Dorsolateral prefrontal cortex (tissue), 120 donors: ENCODE measurements at regions of chr15 and their contacts with region 1.

Region 1: DNA sequence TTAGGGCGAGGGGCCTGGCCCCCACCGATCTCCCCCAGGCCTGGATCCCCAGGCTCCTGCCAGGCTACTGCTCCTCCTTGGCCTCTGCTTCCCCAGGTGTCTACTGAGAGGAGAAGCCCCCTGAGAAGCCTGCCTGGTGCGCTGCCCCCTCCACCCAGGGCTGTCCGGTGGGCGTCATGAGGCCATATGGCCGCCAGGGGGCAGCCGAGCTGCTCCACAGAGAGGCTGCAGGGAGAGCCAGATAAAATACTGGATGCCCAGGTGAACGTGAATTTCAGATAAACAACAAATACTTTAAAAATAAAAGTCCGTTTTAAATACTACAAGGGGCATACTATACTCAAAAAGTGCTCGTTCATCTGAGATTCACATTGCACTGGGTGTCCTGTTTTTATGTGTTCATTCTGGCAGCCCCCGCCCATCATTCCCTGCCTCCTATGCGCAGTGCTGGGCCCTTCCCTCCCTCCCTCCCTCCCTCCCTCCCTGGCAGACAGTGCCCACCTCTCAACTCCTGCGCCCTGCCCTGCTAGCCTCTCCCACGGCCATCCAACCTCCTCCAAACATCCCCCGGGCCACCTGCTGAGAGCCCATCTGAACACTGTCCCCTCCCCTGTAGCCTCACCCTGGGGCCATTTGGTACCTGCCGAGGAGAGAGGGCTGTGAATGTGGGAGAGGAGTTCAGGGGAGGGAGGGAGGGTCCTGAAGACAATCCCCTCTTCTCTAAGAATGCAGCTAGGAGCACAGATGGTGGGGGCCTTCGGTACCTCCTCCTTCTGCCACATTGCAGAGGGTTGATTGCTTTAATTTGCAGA is 29.6 kb downstream of the PSTPIP1 start:
- DNase-seq: peak; percentile 58 to 81 (median 68)
- H3K4me3 ChIP-seq: peak overlapping the region in 3 of 59 donors; percentile 4 to 26 (median 24)
- H3K27ac ChIP-seq: no peak overlapping the region
- H3K27me3 ChIP-seq: no peaks in the 10 kb centered on the region
- CTCF ChIP-seq: peak; percentile 55 to 99 (median 94)

Region 2: GRCh38 chr15:76931397-76932007 is 93.0 kb before region 1 on chr15 and contains the start of gene RCN2:
- intact Hi-C with region 1: loop called in 1 of 2 experiments (anchors 5 kb)
- DNase-seq: peak; percentile 90 to 98 (median 95)
- H3K4me3 ChIP-seq: peak within 1 kb of the TSS; percentile 45 to 100 (median 83)
- H3K27ac ChIP-seq: peak within 1 kb of the TSS; percentile 41 to 96 (median 87)
- H3K27me3 ChIP-seq: no peaks in the 10 kb centered on the region
- CTCF ChIP-seq: peak in 41 of 56 donors; percentile 3 to 66 (median 32)
- total RNA-seq, gene RCN2: 30.8 to 80.2 (median 58.9) TPM

Region 3: GRCh38 chr15:76973362-76973743 is 51.1 kb before region 1 on chr15:
- intact Hi-C with region 1: loop called in 1 of 2 experiments (anchors 5 kb)
- DNase-seq: peak in 6 of 10 donors; percentile 51 to 73 (median 64)
- H3K4me3 ChIP-seq: peak overlapping the region in 20 of 59 donors; percentile 4 to 45 (median 16)
- H3K27ac ChIP-seq: peak overlapping the region in 22 of 59 donors; percentile 0 to 69 (median 30)
- H3K27me3 ChIP-seq: no peaks in the 10 kb centered on the region
- CTCF ChIP-seq: peak; percentile 8 to 86 (median 64)

Region 4: DNA sequence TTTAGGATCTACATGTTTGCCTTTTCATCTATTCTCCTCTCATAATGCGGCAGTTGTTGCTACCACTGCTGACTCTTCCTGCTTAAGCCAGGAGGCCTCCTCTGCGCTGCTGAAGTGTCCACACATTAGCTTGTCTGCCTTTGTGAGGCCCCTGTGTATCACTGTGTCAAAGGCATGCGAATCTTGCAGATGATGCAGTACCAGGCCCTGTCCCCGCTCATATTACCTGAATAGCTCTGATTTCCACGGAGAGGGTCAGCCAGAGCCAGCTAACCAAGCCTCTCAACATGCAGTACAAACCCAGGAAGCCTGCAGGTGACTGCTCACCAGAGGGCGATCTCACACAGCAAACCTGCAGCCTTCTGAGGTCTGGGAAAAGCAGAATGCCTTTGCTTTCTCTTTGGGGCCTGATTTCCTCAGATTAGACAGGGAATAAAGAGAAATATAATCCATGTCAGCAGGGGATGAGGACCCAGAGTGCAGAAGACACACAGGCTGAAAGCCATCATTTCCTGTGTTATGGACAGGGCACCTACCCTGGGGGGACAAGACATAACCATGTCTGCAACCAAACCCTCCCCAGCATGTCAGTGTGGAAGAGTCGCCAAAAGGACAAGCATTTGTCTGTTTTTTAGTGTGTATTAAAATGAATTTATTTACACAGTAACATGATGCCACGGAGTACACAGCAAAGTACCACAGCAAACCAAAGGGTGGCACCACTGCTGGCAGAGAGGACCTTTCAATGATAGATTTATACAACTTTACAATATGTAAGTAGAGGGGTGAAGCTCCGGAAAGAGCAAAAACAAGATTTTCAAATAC is 83.3 kb after region 1 on chr15:
- intact Hi-C with region 1: loop called (anchors 5 kb)
- DNase-seq: peak in 9 of 10 donors; percentile 46 to 71 (median 65)
- H3K4me3 ChIP-seq: no peak overlapping the region
- H3K27ac ChIP-seq: peak overlapping the region in 46 of 59 donors; percentile 1 to 77 (median 48)
- H3K27me3 ChIP-seq: no peaks in the 10 kb centered on the region
- CTCF ChIP-seq: peak in 54 of 56 donors; percentile 25 to 76 (median 59)